AG04449 (cell line): ENCODE measurements at regions of chr3 and their contacts with region 1.

Region 1: DNA sequence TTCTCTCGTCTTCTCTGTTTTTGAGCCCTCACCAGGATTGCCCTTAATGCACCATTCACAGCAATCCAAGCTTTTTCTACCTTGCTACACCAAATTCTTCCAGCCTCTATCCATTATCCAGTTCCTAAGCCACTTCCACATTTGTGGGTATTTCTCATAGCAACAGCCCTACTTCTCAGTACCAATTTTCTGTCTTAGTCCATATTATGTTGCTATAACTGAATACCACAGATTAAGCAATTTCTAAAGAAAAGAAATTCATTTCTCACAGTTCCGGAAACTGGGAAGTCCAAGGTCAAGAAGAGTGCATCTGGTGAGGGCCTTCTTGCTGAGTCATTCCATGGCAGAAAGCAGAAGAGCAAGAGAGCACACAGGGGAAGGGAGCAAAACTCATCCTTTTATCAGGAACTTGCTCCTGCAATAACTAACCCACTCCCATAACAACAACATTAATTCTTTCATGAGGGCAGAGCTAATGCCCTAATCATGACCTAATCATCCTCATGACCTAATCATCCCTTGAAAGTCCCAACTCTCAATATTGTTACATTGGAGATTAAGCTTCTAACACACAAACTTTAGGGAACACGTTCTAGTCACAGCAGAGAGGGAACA is 9.7 kb upstream of the EIF1B start:
- DNase-seq: peak; percentile 70
- H3K4me3 ChIP-seq: no peak overlapping the region
- CTCF ChIP-seq: no peak

Region 2: GRCh38 chr3:40267937-40268723 is 31.7 kb before region 1 on chr3:
- CTCF ChIA-PET with region 1: no interaction called
- POLR2A ChIA-PET with region 1: no interaction called
- DNase-seq: no peak
- H3K4me3 ChIP-seq: no peak overlapping the region
- CTCF ChIP-seq: no peak

Region 3: DNA sequence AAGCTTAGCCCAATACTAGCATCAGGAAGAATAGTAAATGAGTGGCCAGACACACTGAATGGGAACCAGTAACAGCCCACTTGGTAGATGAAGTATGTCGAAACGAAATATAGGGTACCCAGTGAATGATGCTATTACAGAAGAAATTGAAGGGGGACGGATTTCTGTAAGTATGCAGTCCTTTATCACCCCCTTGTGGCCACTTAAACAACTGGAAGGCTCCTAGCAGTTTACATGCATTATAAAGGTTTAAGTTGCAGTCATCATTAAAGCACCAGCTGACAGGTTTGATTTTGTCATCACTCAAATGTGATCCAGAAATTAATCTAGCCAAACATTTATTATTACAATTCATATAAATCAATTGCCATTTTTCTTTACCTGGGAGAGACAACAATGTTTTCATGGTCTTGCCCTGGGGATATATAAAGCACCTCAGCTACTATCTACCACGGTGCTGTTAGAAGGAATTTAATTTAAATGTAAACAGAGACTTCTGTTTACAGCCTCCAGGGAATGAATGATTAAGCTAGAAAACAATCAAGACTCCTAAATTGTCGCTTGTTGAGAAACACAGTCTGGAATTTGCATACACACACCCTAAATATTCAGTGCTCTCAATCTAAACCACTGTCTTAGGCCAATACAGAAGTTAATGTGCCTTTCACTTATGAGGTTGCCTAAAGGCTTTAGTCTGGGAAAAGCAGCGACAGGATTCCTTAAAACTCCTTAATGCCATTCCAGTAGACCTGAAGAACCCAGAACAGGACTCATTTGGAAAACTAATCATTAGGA is 17.4 kb after region 1 on chr3:
- CTCF ChIA-PET with region 1: interaction called, 12 read pairs
- POLR2A ChIA-PET with region 1: no interaction called
- DNase-seq: peak; percentile 28
- H3K4me3 ChIP-seq: no peak overlapping the region
- CTCF ChIP-seq: peak; percentile 66

Region 4: GRCh38 chr3:40437889-40438288 is 138.1 kb after region 1 on chr3:
- CTCF ChIA-PET with region 1: no interaction called
- POLR2A ChIA-PET with region 1: no interaction called
- DNase-seq: no peak
- H3K4me3 ChIP-seq: no peak overlapping the region
- CTCF ChIP-seq: no peak

Region 5: GRCh38 chr3:40452876-40453730 is 153.3 kb after region 1 on chr3:
- CTCF ChIA-PET with region 1: no interaction called
- POLR2A ChIA-PET with region 1: no interaction called
- DNase-seq: peak; percentile 90
- H3K4me3 ChIP-seq: peak overlapping the region; percentile 85
- CTCF ChIP-seq: no peak